Activated CD4-positive, alpha-beta T cell treated with anti-CD3 and anti-CD28 coated beads for 36 hours (primary cell): ENCODE measurements at regions of chr4 and their contacts with region 1.

Region 1: DNA sequence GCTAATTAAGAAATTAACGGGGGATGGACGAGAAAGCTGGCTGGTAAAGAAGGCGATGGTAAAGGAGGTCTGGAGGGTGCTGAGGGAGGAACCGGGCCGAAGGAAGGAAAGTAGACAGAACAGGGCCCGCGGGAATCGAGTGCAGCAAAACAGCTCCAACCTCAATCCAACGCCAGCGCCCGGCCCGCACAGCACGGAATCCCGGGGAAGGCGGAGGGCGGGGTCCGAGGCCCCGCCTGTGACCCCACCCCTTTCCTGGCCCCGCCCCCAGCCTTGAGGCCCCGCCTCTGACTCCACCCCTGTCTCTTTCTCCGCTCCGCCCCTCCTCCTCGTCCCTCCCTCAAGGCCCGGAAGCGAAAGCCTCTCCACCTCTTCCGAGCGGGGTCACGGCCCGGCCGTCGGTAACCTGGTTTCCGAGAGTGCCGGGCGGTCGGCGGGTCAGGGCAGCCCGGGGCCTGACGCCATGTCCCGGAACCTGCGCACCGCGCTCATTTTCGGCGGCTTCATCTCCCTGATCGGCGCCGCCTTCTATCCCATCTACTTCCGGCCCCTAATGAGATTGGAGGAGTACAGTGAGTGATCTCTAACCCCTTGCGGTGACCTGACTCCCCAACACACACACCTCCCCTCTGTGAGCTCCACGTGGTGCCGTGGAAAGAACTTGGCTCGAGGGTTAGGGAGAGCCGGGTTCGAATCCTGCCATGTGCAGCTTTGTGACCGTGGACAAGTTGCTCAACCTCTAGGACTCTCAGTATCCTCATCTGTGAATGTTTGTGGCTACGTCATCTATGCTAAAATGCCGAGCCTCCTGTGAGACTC is at the start of gene SMIM20:
- DNase-seq: peak; percentile 94
- ATAC-seq: peak; percentile 96
- H3K4me3 Mint-ChIP-seq: peak within 1 kb of the TSS; percentile 93
- H3K27ac Mint-ChIP-seq: peak within 1 kb of the TSS; percentile 93
- H3K4me1 Mint-ChIP-seq: peaks cover 22% of the 10 kb centered on the region
- H3K27me3 Mint-ChIP-seq: no peaks in the 10 kb centered on the region
- total RNA-seq, gene SMIM20: 15.6 to 23.0 TPM

Region 2: DNA sequence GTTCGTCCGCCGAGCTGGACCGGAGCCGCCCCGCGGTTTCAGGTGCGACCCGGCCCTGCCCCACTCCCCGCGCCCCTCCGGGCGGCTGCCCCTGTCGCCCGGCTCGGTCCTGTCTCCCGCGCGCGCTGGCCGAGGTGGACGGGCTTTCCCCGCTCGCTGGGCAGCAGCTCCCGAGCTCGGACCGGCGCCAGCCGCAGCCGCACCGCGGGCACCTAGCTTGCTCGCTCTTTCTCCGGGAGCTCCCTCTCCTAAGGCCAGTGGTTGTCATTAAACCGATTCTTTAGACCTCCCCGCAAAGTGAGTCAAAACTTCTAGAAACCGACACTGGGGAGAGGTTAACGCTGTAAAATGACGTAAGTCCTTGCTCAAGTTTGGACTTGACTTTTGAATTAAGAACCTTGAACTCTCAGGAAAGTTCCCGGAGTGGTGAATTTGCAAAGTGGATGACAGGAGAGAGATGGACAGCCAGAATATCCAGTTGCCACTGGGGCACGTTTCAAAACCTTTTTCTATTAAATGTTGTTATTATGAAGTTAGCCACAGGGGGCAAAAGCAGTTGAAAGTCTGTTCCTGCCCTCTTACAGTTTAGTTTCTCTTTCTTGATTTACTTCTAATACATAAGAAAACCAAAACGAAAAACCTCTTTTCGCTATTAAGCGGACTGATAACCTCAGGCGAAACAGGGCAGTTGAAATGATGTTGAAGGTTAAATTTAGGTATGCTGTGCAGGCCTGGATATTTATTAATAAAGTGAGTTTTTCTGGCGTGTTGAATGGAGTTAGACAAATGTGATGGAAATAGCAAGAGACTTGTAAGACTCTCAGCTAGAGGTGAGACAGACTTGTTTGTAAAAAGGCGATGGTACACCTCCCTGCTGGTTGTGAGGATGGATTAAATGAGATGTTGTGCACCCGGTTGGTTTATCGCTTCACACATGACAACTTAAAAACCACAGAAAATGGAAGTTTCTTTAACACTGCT is 679.4 kb before region 1 on chr4:
- CTCF ChIA-PET with region 1: no interaction called
- POLR2A ChIA-PET with region 1: no interaction called
- intact Hi-C with region 1: loop called in 1 of 2 experiments (anchors 1 kb)
- DNase-seq: peak; percentile 58
- ATAC-seq: peak; percentile 62
- H3K4me3 Mint-ChIP-seq: peak overlapping the region; percentile 91
- H3K27ac Mint-ChIP-seq: peak overlapping the region; percentile 97
- H3K4me1 Mint-ChIP-seq: peaks cover 45% of the 10 kb centered on the region
- H3K27me3 Mint-ChIP-seq: no peaks in the 10 kb centered on the region

Region 3: DNA sequence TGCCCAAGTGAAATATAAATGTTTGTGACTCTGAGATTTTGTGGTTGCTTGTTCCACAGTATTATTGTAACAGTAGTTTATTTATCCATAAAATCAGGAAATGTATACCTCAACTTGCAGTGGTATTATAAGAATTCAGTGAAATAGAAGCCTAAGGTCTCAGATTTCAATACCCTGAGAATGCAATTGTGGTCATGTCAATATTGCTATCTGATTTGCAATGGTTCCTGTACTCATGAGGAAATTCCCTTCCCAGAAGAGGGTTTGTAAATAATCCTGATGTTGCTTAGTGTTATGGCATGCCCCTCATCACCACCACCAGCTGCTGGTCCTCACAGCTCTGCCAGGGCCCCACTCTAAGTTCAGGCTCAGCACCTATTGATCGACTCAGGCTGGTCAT is 190.7 kb before region 1 on chr4:
- CTCF ChIA-PET with region 1: no interaction called
- POLR2A ChIA-PET with region 1: no interaction called
- intact Hi-C with region 1: no loop called
- DNase-seq: no peak
- ATAC-seq: no peak
- H3K4me3 Mint-ChIP-seq: no peak overlapping the region
- H3K27ac Mint-ChIP-seq: no peak overlapping the region
- H3K4me1 Mint-ChIP-seq: no peaks in the 10 kb centered on the region
- H3K27me3 Mint-ChIP-seq: no peaks in the 10 kb centered on the region

Region 4: DNA sequence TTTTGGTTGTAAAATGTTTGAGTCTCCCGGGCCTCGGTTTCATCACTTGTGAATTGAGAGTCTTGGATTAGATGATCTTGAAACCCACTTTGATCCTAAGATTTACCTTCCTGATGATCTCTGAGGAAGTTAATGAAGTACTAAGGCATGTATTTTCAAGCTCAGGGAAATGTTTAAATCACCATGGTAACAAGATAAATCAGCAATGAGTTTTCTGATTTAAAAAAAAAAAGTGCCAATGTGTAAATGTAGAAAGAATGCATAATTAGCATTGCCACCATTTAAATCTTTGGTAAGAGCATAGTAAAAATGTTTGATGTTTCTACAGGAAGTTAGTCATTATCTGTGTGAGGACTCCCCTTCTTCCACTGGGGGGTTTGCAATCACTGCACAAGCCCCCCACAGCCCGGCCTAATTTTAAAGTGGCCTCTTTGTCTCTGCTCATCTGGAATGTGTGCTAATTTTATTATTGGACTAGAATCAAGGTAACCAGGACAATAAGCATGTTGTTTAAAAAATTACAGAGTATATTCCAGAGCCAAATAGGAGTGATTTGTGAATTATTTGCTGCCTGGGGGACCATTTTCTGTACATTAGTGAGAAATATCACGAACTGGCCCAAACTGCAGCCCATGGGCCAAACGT is 164.8 kb before region 1 on chr4:
- CTCF ChIA-PET with region 1: no interaction called
- POLR2A ChIA-PET with region 1: no interaction called
- intact Hi-C with region 1: no loop called
- DNase-seq: no peak
- ATAC-seq: no peak
- H3K4me3 Mint-ChIP-seq: no peak overlapping the region
- H3K27ac Mint-ChIP-seq: no peak overlapping the region
- H3K4me1 Mint-ChIP-seq: no peaks in the 10 kb centered on the region
- H3K27me3 Mint-ChIP-seq: no peaks in the 10 kb centered on the region

Region 5: DNA sequence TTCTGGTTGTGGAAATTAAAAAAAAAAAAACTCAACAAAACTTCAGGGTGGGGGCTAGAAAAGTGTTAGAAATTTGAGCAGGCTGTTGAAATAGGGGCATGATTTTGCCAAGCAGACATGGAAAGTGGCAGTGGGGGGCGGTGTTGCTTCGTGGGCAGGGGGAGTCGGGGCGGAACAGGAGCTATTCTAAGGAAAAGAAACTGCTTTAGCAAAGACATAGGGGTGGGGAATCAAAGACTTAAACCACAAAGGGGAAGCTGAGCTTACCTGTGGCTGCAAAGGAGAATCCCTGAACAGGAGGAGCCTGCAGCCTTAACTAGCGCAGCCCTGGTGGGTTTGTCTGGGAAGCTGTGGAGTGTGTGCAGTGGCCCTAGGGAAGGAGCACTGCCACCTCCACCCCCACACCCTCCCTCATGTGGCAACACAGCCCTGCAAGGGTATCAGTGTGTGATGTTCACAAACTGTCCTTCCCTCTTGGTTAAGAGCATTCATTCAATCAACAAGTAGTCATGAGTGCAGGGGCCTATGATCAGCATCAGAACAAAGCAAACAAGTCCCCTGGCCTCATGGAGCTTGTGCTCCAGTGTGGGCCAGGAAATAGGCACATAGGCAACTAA is 71.7 kb before region 1 on chr4:
- CTCF ChIA-PET with region 1: no interaction called
- POLR2A ChIA-PET with region 1: no interaction called
- intact Hi-C with region 1: loop called in 1 of 2 experiments (anchors 5 kb)
- DNase-seq: peak; percentile 57
- ATAC-seq: peak; percentile 17
- H3K4me3 Mint-ChIP-seq: no peak overlapping the region
- H3K27ac Mint-ChIP-seq: peak overlapping the region; percentile 20
- H3K4me1 Mint-ChIP-seq: peaks cover 42% of the 10 kb centered on the region
- H3K27me3 Mint-ChIP-seq: no peaks in the 10 kb centered on the region

Region 6: DNA sequence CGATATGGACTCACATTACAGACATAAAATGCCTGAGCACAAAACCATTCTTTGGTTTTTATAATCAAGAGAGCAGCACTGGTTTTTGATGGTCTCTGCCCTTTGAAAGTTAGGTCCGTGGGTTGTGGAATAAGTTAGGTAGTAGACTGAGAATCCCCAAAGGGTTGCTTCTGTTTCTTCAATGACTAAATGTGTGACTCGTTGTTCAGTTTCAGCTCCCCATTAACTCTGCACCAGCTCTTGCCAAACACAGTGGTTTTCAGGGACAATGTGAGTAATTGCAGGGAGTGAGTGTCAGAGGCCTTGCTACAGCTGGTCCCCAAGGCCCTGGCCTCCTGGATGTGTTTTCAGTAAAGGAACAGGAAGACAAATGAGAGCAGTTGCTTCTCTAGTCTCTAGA is 24.7 kb after region 1 on chr4:
- CTCF ChIA-PET with region 1: no interaction called
- POLR2A ChIA-PET with region 1: no interaction called
- intact Hi-C with region 1: loop called (anchors 1 kb)
- DNase-seq: peak; percentile 76
- ATAC-seq: peak; percentile 97
- H3K4me3 Mint-ChIP-seq: peak overlapping the region; percentile 5
- H3K27ac Mint-ChIP-seq: peak overlapping the region; percentile 72
- H3K4me1 Mint-ChIP-seq: peaks cover 22% of the 10 kb centered on the region
- H3K27me3 Mint-ChIP-seq: peaks cover 18% of the 10 kb centered on the region